ENCODE measurements at regions of chr6 and their contacts with region 1.

Region 1: DNA sequence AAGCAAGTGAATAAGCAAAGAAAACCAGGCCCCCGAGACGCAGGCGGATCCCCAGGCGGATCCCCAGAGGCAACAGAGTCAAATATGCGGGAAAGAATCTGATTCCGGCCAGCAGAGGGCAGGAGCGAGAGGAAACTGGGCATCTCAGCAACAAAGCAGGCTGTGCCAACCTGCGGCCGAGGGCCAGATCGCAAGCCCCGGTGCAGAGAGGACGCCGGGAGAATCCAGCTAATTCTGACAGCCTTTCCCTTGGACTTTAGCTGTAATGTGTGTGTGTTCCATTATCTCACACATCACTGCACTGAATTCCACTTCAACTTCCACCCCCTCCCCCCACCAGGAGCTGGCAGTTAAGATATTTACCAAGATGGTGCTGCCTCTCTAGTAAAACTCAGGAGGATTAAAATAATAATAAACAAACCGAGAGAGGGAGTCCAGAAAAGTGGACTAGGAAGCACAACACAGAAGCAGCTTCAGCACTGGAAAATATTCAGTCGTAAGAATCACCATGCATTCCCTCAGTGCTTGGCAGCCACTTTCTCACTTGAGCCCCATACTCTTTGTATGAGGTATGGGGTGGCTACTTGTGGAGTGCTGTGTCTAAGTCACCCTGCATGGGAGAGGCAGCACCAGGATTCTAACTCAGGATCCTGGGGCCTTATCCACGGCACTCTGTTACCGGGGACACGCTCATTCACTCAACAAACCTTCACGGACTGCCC is 66.2 kb upstream of the SNX9 start:
- DNase-seq: peak; percentile 91
- H3K4me3 Mint-ChIP-seq: peak overlapping the region; percentile 38
- H3K27ac Mint-ChIP-seq: peak overlapping the region; percentile 89
- H3K4me1 Mint-ChIP-seq: peaks cover 92% of the 10 kb centered on the region
- H3K27me3 Mint-ChIP-seq: no peaks in the 10 kb centered on the region

Region 2: DNA sequence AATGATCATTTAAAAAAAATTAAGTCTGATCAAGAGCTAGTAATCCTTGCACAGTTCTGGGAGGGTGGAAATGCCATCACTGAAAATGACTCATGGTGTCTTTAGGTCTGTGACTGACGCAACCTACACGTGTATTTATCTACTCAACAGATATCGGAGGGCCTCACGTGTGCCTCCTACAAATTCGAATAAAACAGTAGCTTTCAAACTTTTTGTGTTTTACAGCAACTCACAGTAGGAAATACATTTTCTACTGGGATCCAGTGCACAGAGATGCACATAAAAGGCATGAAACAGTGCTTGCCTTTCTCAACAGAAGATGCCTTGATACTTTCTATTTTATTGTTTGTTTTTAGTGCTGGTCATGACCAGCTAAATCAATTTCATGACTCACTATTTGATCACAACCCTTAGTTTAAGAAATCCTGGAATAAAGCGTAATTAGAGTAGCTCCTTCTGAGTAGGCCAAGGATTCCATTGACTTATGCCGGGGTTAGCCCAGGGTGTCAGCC is 143.8 kb before region 1 on chr6:
- CTCF ChIA-PET with region 1: no interaction called
- POLR2A ChIA-PET with region 1: no interaction called
- intact Hi-C with region 1: no loop called
- DNase-seq: no peak
- H3K4me3 Mint-ChIP-seq: no peak overlapping the region
- H3K27ac Mint-ChIP-seq: no peak overlapping the region
- H3K4me1 Mint-ChIP-seq: no peaks in the 10 kb centered on the region
- H3K27me3 Mint-ChIP-seq: no peaks in the 10 kb centered on the region

Region 3: GRCh38 chr6:157667211-157668008 is 89.5 kb before region 1 on chr6:
- CTCF ChIA-PET with region 1: interaction called, 18 read pairs
- POLR2A ChIA-PET with region 1: no interaction called
- intact Hi-C with region 1: loop called (anchors 5 kb)
- DNase-seq: peak; percentile 68
- H3K4me3 Mint-ChIP-seq: no peak overlapping the region
- H3K27ac Mint-ChIP-seq: no peak overlapping the region
- H3K4me1 Mint-ChIP-seq: peaks cover 13% of the 10 kb centered on the region
- H3K27me3 Mint-ChIP-seq: peaks cover 7% of the 10 kb centered on the region

Region 4: GRCh38 chr6:157699777-157700636 is 56.9 kb before region 1 on chr6:
- CTCF ChIA-PET with region 1: no interaction called
- POLR2A ChIA-PET with region 1: no interaction called
- intact Hi-C with region 1: no loop called
- DNase-seq: no peak
- H3K4me3 Mint-ChIP-seq: no peak overlapping the region
- H3K27ac Mint-ChIP-seq: no peak overlapping the region
- H3K4me1 Mint-ChIP-seq: no peaks in the 10 kb centered on the region
- H3K27me3 Mint-ChIP-seq: peaks cover 3% of the 10 kb centered on the region

Region 5: GRCh38 chr6:157787080-157787479 is 30.2 kb after region 1 on chr6:
- CTCF ChIA-PET with region 1: no interaction called
- POLR2A ChIA-PET with region 1: no interaction called
- intact Hi-C with region 1: no loop called
- DNase-seq: no peak
- H3K4me3 Mint-ChIP-seq: no peak overlapping the region
- H3K27ac Mint-ChIP-seq: no peak overlapping the region
- H3K4me1 Mint-ChIP-seq: peaks cover 7% of the 10 kb centered on the region
- H3K27me3 Mint-ChIP-seq: no peaks in the 10 kb centered on the region

Region 6: GRCh38 chr6:157800420-157801237 is 43.8 kb after region 1 on chr6:
- CTCF ChIA-PET with region 1: interaction called, 26 read pairs
- POLR2A ChIA-PET with region 1: interaction called, 13 read pairs
- intact Hi-C with region 1: no loop called
- DNase-seq: peak; percentile 71
- H3K4me3 Mint-ChIP-seq: peak overlapping the region; percentile 30
- H3K27ac Mint-ChIP-seq: peak overlapping the region; percentile 72
- H3K4me1 Mint-ChIP-seq: peaks cover 60% of the 10 kb centered on the region
- H3K27me3 Mint-ChIP-seq: peaks cover 13% of the 10 kb centered on the region

Region 7: GRCh38 chr6:157830354-157831017 is 73.6 kb after region 1 on chr6:
- CTCF ChIA-PET with region 1: interaction called, 39 read pairs
- POLR2A ChIA-PET with region 1: interaction called, 8 read pairs
- intact Hi-C with region 1: no loop called
- DNase-seq: no peak
- H3K4me3 Mint-ChIP-seq: peak overlapping the region; percentile 20
- H3K27ac Mint-ChIP-seq: peak overlapping the region; percentile 62
- H3K4me1 Mint-ChIP-seq: peaks cover 69% of the 10 kb centered on the region
- H3K27me3 Mint-ChIP-seq: no peaks in the 10 kb centered on the region

Region 8: GRCh38 chr6:157885211-157885788 is 128.4 kb after region 1 on chr6:
- CTCF ChIA-PET with region 1: interaction called, 172 read pairs
- POLR2A ChIA-PET with region 1: interaction called, 8 read pairs
- intact Hi-C with region 1: loop called (anchors 1 kb)
- DNase-seq: peak; percentile 75
- H3K4me3 Mint-ChIP-seq: no peak overlapping the region
- H3K27ac Mint-ChIP-seq: peak overlapping the region; percentile 94
- H3K4me1 Mint-ChIP-seq: peaks cover 68% of the 10 kb centered on the region
- H3K27me3 Mint-ChIP-seq: no peaks in the 10 kb centered on the region

Measured in activated CD4-positive, alpha-beta memory T cell treated with anti-CD3 and anti-CD28 coated beads for 36 hours (primary cell).